Mammary epithelial cell (primary cell): ENCODE measurements at regions of chr3 and their contacts with region 1.

Region 1: GRCh38 chr3:29319262-29319661 is 38.4 kb downstream of the RBMS3 start:
- DNase-seq: no peak
- H3K4me3 ChIP-seq: peak overlapping the region in 1 of 3 experiments; percentile 26
- H3K27ac ChIP-seq: no peak overlapping the region
- H3K4me1 ChIP-seq: peaks cover 14% of the 10 kb centered on the region
- H3K27me3 ChIP-seq: no peaks in the 10 kb centered on the region
- CTCF ChIP-seq: no peak

Region 2: GRCh38 chr3:29291262-29291981 is 27.8 kb before region 1 on chr3:
- CTCF ChIA-PET with region 1: no interaction called
- dilution Hi-C with region 1: no loop called
- in situ Hi-C with region 1: no loop called
- intact Hi-C with region 1: loop called (anchors 2 kb)
- DNase-seq: peak; percentile 34
- H3K4me3 ChIP-seq: no peak overlapping the region
- H3K27ac ChIP-seq: peak overlapping the region; percentile 65
- H3K4me1 ChIP-seq: peaks cover 32% of the 10 kb centered on the region
- H3K27me3 ChIP-seq: no peaks in the 10 kb centered on the region
- CTCF ChIP-seq: no peak

Region 3: GRCh38 chr3:29453284-29454001 is 134.2 kb after region 1 on chr3:
- CTCF ChIA-PET with region 1: interaction called, 30 read pairs
- dilution Hi-C with region 1: no loop called
- in situ Hi-C with region 1: no loop called
- intact Hi-C with region 1: no loop called
- DNase-seq: peak; percentile 26
- H3K4me3 ChIP-seq: no peak overlapping the region
- H3K27ac ChIP-seq: peak overlapping the region; percentile 91
- H3K4me1 ChIP-seq: peaks cover 36% of the 10 kb centered on the region
- H3K27me3 ChIP-seq: no peaks in the 10 kb centered on the region
- CTCF ChIP-seq: no peak

Region 4: DNA sequence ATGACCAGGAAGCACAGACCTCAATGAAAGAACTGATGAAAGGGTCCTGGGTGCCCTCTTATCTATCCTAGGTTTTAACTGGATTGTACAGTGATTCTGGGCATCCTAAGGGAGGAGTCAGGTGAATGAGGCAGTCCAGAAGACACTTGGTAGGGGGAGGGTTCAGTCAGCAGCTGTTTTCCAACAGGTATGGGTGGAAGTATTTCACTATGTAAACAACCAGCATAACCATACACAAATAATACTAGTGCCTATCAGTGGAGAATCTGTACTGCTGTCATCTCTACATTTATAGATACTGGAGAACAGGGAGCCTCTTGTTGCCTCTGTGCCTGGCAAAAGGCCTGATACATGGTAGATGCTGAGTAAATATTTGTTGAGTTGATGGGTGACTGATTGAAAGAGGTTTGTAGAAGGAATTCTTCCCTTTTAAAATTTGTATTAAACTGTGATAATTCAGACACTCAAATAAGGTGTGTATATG is 290.1 kb after region 1 on chr3:
- CTCF ChIA-PET with region 1: no interaction called
- dilution Hi-C with region 1: no loop called
- in situ Hi-C with region 1: no loop called
- intact Hi-C with region 1: no loop called
- DNase-seq: no peak
- H3K4me3 ChIP-seq: no peak overlapping the region
- H3K27ac ChIP-seq: no peak overlapping the region
- H3K4me1 ChIP-seq: no peaks in the 10 kb centered on the region
- H3K27me3 ChIP-seq: no peaks in the 10 kb centered on the region
- CTCF ChIP-seq: no peak